ENCODE measurements at regions of chr17 and their contacts with region 1.

Region 1: DNA sequence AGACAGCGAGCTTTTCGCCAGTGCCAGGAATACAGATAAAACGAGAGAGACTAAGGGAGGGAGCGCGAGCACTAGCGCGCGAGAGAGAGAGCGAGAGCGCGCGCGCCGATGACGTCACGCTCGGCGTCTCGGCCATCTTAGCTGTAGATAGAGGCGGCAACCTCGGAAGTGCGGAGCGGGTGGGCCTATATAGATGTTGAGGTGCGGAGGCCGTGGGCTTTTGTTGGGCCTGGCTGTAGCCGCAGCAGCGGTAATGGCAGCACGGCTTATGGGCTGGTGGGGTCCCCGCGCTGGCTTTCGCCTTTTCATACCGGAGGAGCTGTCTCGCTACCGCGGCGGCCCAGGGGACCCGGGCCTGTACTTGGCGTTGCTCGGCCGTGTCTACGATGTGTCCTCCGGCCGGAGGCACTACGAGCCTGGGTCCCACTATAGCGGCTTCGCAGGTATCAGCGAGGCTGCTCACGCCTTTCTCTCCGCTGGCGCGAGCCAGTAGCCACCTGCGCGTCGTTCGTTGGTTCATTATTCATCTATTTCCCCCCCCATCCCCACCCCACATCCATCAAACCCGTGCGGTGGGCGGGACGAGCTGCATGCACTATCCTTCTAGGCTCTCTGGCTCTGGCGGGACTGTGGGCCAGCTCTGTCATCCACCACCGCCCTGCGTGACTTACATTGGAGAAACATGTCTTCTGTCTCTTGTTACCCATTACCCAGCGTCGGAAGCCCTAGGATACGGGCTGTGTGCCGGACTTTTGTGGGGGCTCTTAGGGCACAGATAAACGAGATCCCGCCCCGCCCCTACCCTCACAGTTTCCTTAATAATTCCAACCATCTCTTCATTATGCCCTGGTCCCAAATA is 795 bp downstream of the CYB5D2 start:
- DNase-seq: peak; percentile 89 to 98
- ATAC-seq: peak; percentile 62 to 84 (median 69)
- H3K4me3 ChIP-seq: peak overlapping the region; percentile 87
- H3K4me3 Mint-ChIP-seq: peak overlapping the region; percentile 100
- H3K27ac ChIP-seq: peak overlapping the region; percentile 95
- H3K27ac Mint-ChIP-seq: peak overlapping the region; percentile 99 to 100
- H3K4me1 ChIP-seq: peaks cover 18% of the 10 kb centered on the region
- H3K4me1 Mint-ChIP-seq: peaks cover 49 to 53% of the 10 kb centered on the region in 2 donors
- H3K27me3 ChIP-seq: no peaks in the 10 kb centered on the region
- H3K27me3 Mint-ChIP-seq: no peaks in the 10 kb centered on the region
- CTCF ChIP-seq: no peak

Region 2: GRCh38 chr17:4187076-4187475 is 43.3 kb after region 1 on chr17:
- intact Hi-C with region 1: no loop called
- DNase-seq: no peak
- ATAC-seq: no peak
- H3K4me3 ChIP-seq: no peak overlapping the region
- H3K4me3 Mint-ChIP-seq: no peak overlapping the region
- H3K27ac ChIP-seq: no peak overlapping the region
- H3K27ac Mint-ChIP-seq: no peak overlapping the region
- H3K4me1 ChIP-seq: no peaks in the 10 kb centered on the region
- H3K4me1 Mint-ChIP-seq: peaks cover 5 to 6% of the 10 kb centered on the region in 2 donors
- H3K27me3 ChIP-seq: no peaks in the 10 kb centered on the region
- H3K27me3 Mint-ChIP-seq: no peaks in the 10 kb centered on the region
- CTCF ChIP-seq: no peak

Region 3: DNA sequence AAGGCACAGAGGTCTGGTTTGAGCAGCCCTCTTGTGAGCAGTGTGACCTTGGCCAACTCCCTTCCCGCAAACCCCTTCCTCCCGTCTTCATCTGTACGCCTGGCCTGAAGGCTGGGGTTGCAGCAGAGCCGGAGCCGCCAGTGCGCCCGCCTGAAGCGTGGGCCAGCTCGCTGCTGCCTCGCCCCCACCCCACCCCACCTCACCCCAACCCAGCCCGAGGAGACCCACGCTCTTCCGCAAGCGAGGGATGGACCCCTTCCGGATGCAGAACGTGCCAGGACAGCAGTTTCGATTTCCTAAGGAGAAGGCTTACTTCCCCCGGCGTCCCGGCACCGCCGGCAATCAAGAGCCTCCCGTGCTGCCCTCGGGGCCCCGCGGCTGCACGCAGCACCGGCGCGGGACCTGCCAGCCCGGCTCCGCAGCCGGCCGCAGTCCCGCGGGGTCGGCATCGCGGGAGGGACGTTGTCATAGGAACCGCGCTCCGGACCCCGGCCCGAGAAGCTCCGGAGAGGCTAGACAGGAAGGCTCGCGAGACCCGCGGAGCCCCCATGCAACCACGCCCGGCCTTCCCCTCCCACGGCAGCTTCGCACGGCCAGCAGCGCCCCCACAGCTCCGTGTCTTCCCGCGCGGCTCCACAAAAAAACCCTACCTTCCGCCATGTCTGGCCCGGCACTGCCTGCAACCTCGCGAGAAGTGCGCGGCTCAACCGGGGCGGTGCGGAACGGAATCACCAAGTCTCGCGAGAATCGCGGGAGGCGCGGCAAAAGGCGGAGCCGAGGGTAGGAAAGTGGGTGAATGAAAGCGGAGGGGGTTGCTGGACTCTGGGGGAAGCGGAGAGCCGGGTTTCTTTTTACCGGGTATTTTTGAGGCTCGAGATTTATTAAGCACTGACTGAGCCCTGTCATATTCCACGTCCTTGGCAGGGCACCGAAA is 119.8 kb after region 1 on chr17 and contains the start of gene ANKFY1:
- intact Hi-C with region 1: loop called (anchors 2 kb)
- DNase-seq: peak; percentile 98
- ATAC-seq: peak; percentile 96 to 97 (median 96)
- H3K4me3 ChIP-seq: peak within 1 kb of the TSS; percentile 70
- H3K4me3 Mint-ChIP-seq: peak within 1 kb of the TSS; percentile 97
- H3K27ac ChIP-seq: peak within 1 kb of the TSS; percentile 67
- H3K27ac Mint-ChIP-seq: peak within 1 kb of the TSS; percentile 89 to 91
- H3K4me1 ChIP-seq: peaks cover 26% of the 10 kb centered on the region
- H3K4me1 Mint-ChIP-seq: peaks cover 31 to 32% of the 10 kb centered on the region in 2 donors
- H3K27me3 ChIP-seq: no peaks in the 10 kb centered on the region
- H3K27me3 Mint-ChIP-seq: no peaks in the 10 kb centered on the region
- CTCF ChIP-seq: no peak
- total RNA-seq, gene ANKFY1: 58.4 to 72.4 (median 68.8) TPM

Measured in natural killer cell (primary cell).